Posterior vena cava (tissue), 2 donors: ENCODE measurements at regions of chr10 and their contacts with region 1.

Region 1: DNA sequence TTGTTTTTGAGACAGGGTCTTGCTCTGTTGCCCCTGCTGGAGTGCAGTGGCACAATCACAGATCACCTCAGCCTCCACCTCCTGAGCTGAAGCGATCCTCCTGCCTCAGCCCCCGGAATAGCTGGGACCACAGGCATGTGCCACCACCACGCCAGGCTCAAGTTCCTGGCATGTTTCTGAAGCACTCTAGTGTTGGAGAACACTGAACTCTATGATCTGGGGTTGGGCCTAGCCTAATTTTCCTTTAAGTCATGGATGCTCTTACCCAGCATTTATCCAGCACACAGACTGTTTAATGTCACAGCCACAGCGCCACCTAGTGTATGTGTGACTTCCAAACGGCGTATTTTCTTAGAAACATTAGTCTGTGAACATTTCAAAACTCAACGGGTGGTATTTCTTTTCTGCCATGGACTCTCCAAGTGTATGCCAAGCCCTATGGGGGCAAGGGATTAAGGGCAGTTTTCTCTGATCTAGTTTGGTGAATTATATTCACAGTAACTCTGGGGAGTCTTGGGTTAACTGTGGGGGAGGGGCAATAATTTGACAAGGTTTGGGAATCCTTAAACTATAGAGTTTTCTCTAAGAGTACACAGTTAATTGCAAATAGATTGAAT is 91.8 kb downstream of the CREM start:
- DNase-seq: peak; percentile 94

Region 2: GRCh38 chr10:34906067-34906965 is 312.1 kb before region 1 on chr10:
- intact Hi-C with region 1: no loop called
- DNase-seq: peak; percentile 87

Region 3: GRCh38 chr10:35112571-35112970 is 105.9 kb before region 1 on chr10:
- intact Hi-C with region 1: loop called in 1 of 2 experiments (anchors 10 kb)
- DNase-seq: no peak

Region 4: GRCh38 chr10:35126530-35127296 is 91.7 kb before region 1 on chr10 and contains the start of gene CREM:
- intact Hi-C with region 1: loop called in 1 of 2 experiments (anchors 5 kb)
- DNase-seq: peak; percentile 99
- total RNA-seq, gene CREM: 41.6 to 43.7 TPM

Region 5: DNA sequence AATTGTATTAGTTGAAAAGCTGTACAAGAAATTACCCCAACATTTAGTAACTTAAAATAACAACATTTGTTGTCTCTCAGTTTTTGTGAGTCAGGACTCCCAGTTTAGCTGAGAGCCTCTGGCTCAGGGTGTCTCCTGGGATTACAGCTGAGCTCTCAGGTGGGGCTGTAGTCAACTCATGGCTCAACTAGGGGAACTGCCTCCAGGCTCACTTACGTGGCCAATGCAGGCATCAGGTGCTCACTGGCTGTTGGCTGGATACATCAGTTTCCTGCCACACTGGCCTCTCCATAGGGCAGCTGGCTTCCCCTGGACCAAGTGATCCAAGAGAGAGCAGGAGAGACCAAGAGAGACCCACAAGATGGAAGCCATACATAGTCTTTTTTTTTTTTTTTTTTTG is 135.4 kb after region 1 on chr10:
- intact Hi-C with region 1: no loop called
- DNase-seq: no peak

Region 6: GRCh38 chr10:35685402-35685801 is 467.0 kb after region 1 on chr10:
- intact Hi-C with region 1: no loop called
- DNase-seq: no peak